ENCODE measurements at regions of chr2 and their contacts with region 1.

Region 1: GRCh38 chr2:70647873-70648481 is 94.4 kb upstream of the TGFA start:
- DNase-seq: peak; percentile 55 to 83 (median 72)
- ATAC-seq: peak; percentile 96
- H3K4me3 ChIP-seq: no peak overlapping the region
- H3K4me3 Mint-ChIP-seq: no peak overlapping the region
- H3K27ac ChIP-seq: no peak overlapping the region
- H3K27ac Mint-ChIP-seq: no peak overlapping the region
- H3K4me1 ChIP-seq: no peaks in the 10 kb centered on the region
- H3K4me1 Mint-ChIP-seq: no peaks in the 10 kb centered on the region
- H3K27me3 ChIP-seq: no peaks in the 10 kb centered on the region
- H3K27me3 Mint-ChIP-seq: peaks cover 6% of the 10 kb centered on the region
- CTCF ChIP-seq: peak; percentile 94

Region 2: DNA sequence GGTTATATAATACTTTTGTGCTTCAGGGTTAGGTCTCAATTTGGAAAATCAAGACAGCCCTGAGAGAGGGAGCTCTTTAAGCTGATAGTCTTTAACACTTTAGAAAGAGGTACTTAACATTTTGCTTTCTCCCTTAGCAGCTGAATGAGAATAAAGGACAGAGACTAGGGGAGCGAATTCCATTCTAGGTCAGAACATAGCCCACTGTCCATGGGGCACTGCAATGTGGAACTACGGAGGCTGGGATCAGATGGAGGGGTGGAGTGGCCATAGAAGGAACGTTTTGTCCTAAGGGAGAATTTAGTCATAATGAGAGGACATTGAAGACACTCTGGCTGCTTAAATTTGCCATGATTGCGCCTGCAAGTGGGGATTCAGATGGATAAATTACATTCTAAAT is 1696.1 kb before region 1 on chr2:
- CTCF ChIA-PET with region 1: no interaction called
- POLR2A ChIA-PET with region 1: no interaction called
- intact Hi-C with region 1: loop called in 1 of 2 experiments (anchors 5 kb)
- DNase-seq: no peak
- ATAC-seq: no peak
- H3K4me3 ChIP-seq: no peak overlapping the region
- H3K4me3 Mint-ChIP-seq: no peak overlapping the region
- H3K27ac ChIP-seq: no peak overlapping the region
- H3K27ac Mint-ChIP-seq: no peak overlapping the region
- H3K4me1 ChIP-seq: no peaks in the 10 kb centered on the region
- H3K4me1 Mint-ChIP-seq: no peaks in the 10 kb centered on the region
- H3K27me3 ChIP-seq: peaks cover 0 to 2% of the 10 kb centered on the region in 2 experiments
- H3K27me3 Mint-ChIP-seq: peaks cover 2% of the 10 kb centered on the region
- CTCF ChIP-seq: no peak

Region 3: GRCh38 chr2:70553584-70554337 is 94.2 kb before region 1 on chr2 and contains the start of gene TGFA:
- CTCF ChIA-PET with region 1: interaction called, 4 read pairs
- POLR2A ChIA-PET with region 1: no interaction called
- intact Hi-C with region 1: loop called in 1 of 2 experiments (anchors 2 kb)
- DNase-seq: peak; percentile 28 to 85 (median 67)
- ATAC-seq: peak; percentile 71
- H3K4me3 ChIP-seq: peak within 1 kb of the TSS; percentile 56 to 72
- H3K4me3 Mint-ChIP-seq: peak within 1 kb of the TSS; percentile 92
- H3K27ac ChIP-seq: no peak within 1 kb of the TSS
- H3K27ac Mint-ChIP-seq: peak within 1 kb of the TSS; percentile 86
- H3K4me1 ChIP-seq: peaks cover 21% of the 10 kb centered on the region
- H3K4me1 Mint-ChIP-seq: peaks cover 29% of the 10 kb centered on the region
- H3K27me3 ChIP-seq: no peaks in the 10 kb centered on the region
- H3K27me3 Mint-ChIP-seq: peaks cover 4% of the 10 kb centered on the region
- CTCF ChIP-seq: peak; percentile 81
- total RNA-seq, gene TGFA: 0.58 to 1.0 TPM

Region 4: DNA sequence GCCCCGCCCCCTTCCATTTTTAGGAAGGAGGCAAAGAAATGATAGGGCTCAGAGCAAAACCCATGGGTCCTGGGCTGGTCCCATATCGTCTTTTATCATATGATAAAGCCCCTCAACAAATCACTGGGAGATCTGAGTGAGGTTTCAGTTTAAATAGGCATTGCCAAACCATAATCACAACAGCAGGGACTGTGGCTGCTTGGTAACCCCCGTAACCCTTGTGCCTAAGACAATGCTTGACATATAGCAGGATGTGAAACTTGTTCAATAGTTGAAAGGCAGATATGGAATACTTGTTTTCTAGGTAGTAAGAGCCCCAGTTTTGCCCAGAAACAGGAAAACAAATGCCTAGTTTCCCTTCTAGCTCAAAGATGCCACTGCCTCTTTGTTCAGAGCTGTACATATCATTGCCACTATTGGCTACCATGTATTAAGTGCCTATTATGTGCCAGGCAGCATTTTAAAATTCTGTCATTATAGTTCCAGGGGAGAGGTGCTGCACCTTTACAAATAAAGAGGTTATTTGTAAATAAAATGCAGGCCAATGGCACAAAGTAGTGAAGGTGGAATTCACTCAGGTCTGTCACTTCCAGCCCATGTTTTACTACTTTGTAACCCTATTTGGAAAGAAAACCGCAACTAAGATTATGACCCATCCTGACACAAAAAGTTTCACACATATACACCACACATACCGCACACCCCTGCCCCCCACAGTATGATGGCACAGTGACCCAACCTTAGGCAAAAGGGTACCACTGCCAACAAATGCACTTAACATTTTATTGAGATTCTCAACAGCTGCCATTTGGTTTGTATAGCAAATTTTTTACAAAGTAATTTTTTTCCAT is 434.6 kb after region 1 on chr2:
- CTCF ChIA-PET with region 1: no interaction called
- POLR2A ChIA-PET with region 1: no interaction called
- intact Hi-C with region 1: no loop called
- DNase-seq: peak in 3 of 9 experiments; percentile 34 to 42 (median 40)
- ATAC-seq: peak; percentile 36
- H3K4me3 ChIP-seq: no peak overlapping the region
- H3K4me3 Mint-ChIP-seq: no peak overlapping the region
- H3K27ac ChIP-seq: no peak overlapping the region
- H3K27ac Mint-ChIP-seq: peak overlapping the region; percentile 14
- H3K4me1 ChIP-seq: peaks cover 7% of the 10 kb centered on the region
- H3K4me1 Mint-ChIP-seq: peaks cover 15% of the 10 kb centered on the region
- H3K27me3 ChIP-seq: no peaks in the 10 kb centered on the region
- H3K27me3 Mint-ChIP-seq: peaks cover 8% of the 10 kb centered on the region
- CTCF ChIP-seq: no peak

Region 5: DNA sequence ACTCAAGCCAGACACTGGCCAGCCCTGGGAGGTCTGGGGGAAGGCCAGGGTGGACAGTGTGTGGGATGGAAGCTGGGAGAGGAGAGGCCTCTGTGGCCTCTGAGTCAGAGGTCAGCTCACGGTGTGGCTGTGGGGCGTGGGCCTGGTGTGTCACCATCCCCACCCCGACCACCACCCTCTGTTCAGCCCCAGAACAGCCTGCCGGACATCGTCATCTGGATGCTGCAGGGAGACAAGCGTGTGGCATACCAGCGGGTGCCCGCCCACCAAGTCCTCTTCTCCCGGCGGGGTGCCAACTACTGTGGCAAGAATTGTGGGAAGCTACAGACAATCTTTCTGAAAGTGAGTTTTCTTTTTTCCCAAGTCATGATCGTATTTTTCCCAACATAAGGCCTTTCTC is 915.9 kb after region 1 on chr2:
- CTCF ChIA-PET with region 1: no interaction called
- POLR2A ChIA-PET with region 1: no interaction called
- intact Hi-C with region 1: no loop called
- DNase-seq: no peak
- ATAC-seq: no peak
- H3K4me3 ChIP-seq: no peak overlapping the region
- H3K4me3 Mint-ChIP-seq: no peak overlapping the region
- H3K27ac ChIP-seq: no peak overlapping the region
- H3K27ac Mint-ChIP-seq: no peak overlapping the region
- H3K4me1 ChIP-seq: no peaks in the 10 kb centered on the region
- H3K4me1 Mint-ChIP-seq: no peaks in the 10 kb centered on the region
- H3K27me3 ChIP-seq: no peaks in the 10 kb centered on the region
- H3K27me3 Mint-ChIP-seq: no peaks in the 10 kb centered on the region
- CTCF ChIP-seq: no peak